ENCODE measurements at regions of chr1 and their contacts with region 1.

Region 1: DNA sequence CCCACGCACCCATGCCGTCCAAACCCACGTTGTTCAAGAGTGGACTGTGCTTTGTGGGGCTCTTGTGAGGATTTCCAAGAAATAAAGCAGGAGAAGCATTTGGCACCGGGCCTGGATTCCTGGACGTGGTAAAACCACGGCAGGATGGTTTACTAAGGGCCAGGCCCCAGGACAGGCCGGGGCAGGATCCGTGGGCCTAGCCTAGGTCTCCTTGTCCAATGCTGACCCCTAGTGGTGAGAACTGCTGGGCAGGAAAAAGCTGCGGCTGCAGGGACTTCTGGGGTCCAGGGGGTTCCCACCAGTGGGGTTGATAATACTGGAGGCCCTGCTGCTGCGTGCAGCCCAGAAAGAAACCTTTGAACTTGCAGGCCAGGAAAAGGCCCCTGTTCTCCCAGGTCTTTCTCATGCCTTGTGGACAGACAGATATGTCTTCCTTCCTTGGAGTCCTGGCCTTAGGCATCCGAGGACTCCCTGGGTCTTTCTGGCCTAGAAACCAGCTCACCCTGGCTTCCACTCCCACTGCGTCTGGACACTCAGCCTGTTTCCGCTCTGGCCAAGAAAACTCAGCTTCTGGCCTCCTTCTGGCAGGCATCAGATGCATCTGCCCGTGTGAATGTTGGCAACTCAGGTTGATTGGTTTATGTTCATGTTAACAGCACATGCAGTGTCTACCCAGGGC is 106.9 kb upstream of the TMEM51 start:
- DNase-seq: peak; percentile 74
- H3K4me3 ChIP-seq: no peak overlapping the region
- H3K27ac ChIP-seq: peak overlapping the region; percentile 47
- H3K27me3 ChIP-seq: no peaks in the 10 kb centered on the region
- CTCF ChIP-seq: peak; percentile 98

Region 2: GRCh38 chr1:14639291-14640050 is 407.2 kb before region 1 on chr1:
- CTCF ChIA-PET with region 1: no interaction called
- POLR2A ChIA-PET with region 1: no interaction called
- DNase-seq: no peak
- H3K4me3 ChIP-seq: no peak overlapping the region
- H3K27ac ChIP-seq: no peak overlapping the region
- H3K27me3 ChIP-seq: no peaks in the 10 kb centered on the region
- CTCF ChIP-seq: no peak

Region 3: GRCh38 chr1:14778898-14779865 is 267.4 kb before region 1 on chr1:
- CTCF ChIA-PET with region 1: interaction called, 41 read pairs
- POLR2A ChIA-PET with region 1: no interaction called
- DNase-seq: no peak
- H3K4me3 ChIP-seq: no peak overlapping the region
- H3K27ac ChIP-seq: no peak overlapping the region
- H3K27me3 ChIP-seq: no peaks in the 10 kb centered on the region
- CTCF ChIP-seq: peak; percentile 76

Region 4: GRCh38 chr1:15056515-15057285 is 10.1 kb after region 1 on chr1:
- CTCF ChIA-PET with region 1: interaction called, 13 read pairs
- POLR2A ChIA-PET with region 1: no interaction called
- DNase-seq: peak; percentile 18
- H3K4me3 ChIP-seq: no peak overlapping the region
- H3K27ac ChIP-seq: peak overlapping the region; percentile 11
- H3K27me3 ChIP-seq: no peaks in the 10 kb centered on the region
- CTCF ChIP-seq: no peak

Region 5: DNA sequence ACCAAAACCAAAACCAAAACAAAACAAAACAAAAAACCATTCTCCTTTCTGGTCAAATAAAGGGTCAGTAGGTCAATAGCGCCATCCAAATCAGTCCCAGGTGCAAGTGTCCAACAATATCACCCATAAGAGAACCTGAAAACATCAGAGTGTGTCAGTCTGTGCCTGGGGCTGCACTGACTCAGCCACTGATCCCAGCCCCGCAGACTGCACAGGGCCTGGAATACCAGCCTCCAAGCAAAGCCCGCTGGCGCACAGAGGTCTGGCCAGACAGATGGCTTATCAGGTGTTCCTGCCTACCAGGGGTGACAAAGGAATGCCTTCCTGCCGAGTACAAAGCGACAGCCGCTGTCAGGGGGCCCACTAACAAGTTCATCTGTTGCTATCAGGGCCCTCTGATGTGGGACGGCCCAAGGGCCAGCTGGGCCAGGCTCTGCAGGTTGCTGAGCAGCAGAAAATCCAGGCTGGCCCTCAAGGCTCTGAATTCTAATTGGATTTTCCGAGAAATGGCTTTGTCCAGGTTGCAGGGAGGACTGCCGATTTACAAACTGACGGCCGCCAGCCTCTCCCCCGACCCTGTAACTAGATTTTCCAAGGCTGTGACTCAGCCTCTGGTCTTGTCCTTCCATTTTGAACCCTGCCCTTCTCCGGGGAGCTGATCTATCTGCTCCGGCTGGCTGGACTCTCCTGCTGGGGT is 93.2 kb after region 1 on chr1:
- CTCF ChIA-PET with region 1: no interaction called
- POLR2A ChIA-PET with region 1: no interaction called
- DNase-seq: no peak
- H3K4me3 ChIP-seq: no peak overlapping the region
- H3K27ac ChIP-seq: no peak overlapping the region
- H3K27me3 ChIP-seq: peaks cover 7% of the 10 kb centered on the region
- CTCF ChIP-seq: no peak